Heart left ventricle (tissue), 16 donors: ENCODE measurements at regions of chr5 and their contacts with region 1.

Region 1: DNA sequence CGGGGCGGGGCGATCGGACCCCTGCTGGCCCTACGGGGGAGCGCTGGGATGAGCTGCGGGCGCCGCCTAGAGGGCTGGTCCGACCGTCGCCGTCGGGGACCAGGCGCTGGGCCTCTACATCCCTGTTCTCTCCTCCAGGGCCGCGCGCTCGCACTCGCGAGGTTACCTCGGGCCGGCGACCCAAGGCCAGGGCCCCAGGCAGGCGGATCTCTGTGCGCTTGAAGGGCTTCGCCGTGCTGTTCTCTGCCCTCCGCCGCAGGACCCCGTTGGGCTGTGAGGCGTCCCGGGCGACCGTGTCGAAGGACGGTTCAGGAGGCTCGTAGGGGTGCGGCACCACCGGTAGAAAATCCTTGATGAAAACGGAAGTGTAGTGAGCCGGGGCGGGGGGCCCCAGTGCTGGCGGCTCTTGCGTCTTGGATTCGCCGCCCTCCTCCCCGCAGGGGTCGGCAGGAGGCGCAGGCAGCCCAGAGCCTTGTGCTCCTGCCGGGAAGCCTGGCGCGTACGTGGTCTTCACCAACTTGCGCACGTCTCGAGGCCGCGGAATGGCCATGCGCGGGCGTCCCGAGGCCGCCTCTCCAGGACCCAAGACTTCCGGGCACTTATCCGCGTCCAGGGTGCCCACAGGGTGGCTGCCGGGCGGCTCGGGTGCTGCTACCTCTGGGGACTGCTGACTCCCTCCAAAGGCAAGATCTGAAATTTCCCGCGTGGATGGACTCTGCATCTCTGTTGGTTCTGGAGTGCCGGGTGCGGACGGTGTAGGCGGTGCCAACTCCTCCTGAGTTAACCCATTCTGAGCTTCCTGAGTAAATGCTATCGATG is 2.0 kb downstream of the PROB1 start:
- DNase-seq: peak in 4 of 5 donors; percentile 57 to 86 (median 66)
- ATAC-seq: peak in 3 of 4 donors; percentile 8 to 27 (median 19)
- H3K4me3 ChIP-seq: peak overlapping the region; percentile 65 to 82 (median 69)
- H3K27ac ChIP-seq: peak overlapping the region in 10 of 12 donors; percentile 84 to 97 (median 92)
- H3K4me1 ChIP-seq: peaks cover 5 to 90% (median 61%) of the 10 kb centered on the region in 12 donors
- H3K27me3 ChIP-seq: peaks cover 0 to 28% (median 0%) of the 10 kb centered on the region in 9 donors
- CTCF ChIP-seq: peak in 11 of 12 donors; percentile 23 to 56 (median 39)
- POLR2A ChIP-seq: no peak

Region 2: DNA sequence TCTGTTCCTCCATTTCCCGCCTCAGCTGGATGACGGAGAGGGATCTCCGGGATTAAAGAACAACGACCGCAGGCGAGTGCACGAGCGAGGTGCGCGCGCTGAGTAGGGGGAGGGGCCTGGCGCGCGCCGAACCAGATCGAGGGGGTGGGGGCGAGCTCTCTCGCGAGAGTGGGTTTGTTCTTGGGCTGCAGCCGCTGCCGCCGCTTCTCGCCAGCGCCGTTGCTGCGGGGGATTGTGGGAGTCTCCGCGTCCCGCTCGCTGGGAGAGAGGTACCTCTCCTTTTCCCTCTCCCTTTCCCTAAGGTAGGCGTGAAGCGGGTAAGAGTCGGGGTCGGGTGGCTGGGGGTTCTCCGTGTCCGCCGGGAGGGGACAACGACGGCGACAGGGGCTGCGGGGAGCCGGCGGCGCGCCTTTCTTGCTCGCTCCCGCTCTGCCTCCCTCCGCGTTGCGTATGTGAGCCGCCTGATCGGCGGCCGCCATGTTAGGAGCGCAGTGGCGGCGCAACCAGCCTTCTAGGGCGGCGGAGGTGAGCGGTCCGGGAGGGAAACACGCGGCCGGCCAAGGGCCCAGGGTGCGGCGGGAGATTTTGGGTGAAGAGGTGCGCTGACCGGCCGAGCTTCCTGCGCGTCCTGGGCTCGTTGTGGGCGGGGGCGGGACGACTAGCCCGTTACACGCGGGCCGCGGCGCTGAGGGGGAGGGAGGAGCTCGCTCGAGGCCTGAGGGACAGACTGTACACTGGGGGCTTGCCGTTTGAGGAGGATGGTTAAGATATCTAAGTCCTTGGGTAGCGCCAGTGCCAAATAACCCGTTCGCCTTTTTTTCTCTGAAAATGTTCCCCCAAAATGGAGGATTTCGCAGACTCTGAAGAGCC is 99.1 kb before region 1 on chr5 and contains the start of gene MATR3:
- intact Hi-C with region 1: loop called in 1 of 10 experiments (anchors 10 kb)
- DNase-seq: peak; percentile 97
- ATAC-seq: peak; percentile 95 to 97 (median 96)
- H3K4me3 ChIP-seq: peak within 1 kb of the TSS; percentile 64 to 98 (median 88)
- H3K27ac ChIP-seq: peak within 1 kb of the TSS; percentile 93 to 100 (median 99)
- H3K4me1 ChIP-seq: peaks cover 8 to 46% (median 38%) of the 10 kb centered on the region in 12 donors
- H3K27me3 ChIP-seq: no peaks in the 10 kb centered on the region
- CTCF ChIP-seq: no peak
- POLR2A ChIP-seq: peak; percentile 42 to 90
- total RNA-seq, gene MATR3: 133 to 208 (median 139) TPM

Region 3: GRCh38 chr5:139368613-139369012 is 24.3 kb before region 1 on chr5:
- intact Hi-C with region 1: no loop called
- DNase-seq: no peak
- ATAC-seq: no peak
- H3K4me3 ChIP-seq: no peak overlapping the region
- H3K27ac ChIP-seq: peak overlapping the region in 2 of 12 donors; percentile 3 to 33
- H3K4me1 ChIP-seq: peaks cover 0 to 33% (median 5%) of the 10 kb centered on the region in 12 donors
- H3K27me3 ChIP-seq: no peaks in the 10 kb centered on the region
- CTCF ChIP-seq: no peak
- POLR2A ChIP-seq: no peak

Region 4: GRCh38 chr5:139417214-139417613 is 24.3 kb after region 1 on chr5:
- intact Hi-C with region 1: loop called in 4 of 10 experiments (anchors 1 to 5 kb)
- DNase-seq: peak in 4 of 5 donors; percentile 73 to 82 (median 78)
- ATAC-seq: peak; percentile 63 to 73 (median 70)
- H3K4me3 ChIP-seq: no peak overlapping the region
- H3K27ac ChIP-seq: peak overlapping the region; percentile 81 to 96 (median 91)
- H3K4me1 ChIP-seq: peaks cover 18 to 73% (median 63%) of the 10 kb centered on the region in 12 donors
- H3K27me3 ChIP-seq: no peaks in the 10 kb centered on the region
- CTCF ChIP-seq: no peak
- POLR2A ChIP-seq: no peak

Region 5: DNA sequence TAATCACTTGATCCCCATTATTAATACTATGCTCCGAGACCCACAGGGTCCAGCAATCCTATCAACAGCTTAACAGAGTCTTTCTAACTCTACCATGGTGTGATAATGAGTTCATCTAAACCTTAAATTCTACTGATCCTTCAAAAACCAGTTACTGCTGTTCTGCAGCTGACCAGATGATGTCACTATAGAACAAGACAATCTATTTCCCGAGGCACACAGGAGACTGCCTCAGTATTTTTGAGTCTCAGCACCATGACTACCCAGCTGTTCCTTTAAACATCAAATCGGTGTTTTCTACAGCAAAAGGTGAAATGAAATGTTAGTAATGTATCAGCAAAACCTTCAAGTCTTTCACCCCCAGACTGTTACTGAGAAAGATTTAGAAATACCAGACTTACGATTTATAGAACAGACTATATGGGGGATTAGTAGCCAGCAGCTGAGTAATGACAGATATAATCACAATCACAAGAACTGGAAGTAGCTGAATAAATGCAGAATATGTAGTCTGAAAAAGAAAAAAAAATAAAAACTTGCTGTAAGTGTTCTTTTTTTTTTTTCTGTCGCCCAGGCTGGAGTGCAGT is 29.5 kb after region 1 on chr5:
- intact Hi-C with region 1: loop called in 3 of 10 experiments (anchors 1 to 5 kb)
- DNase-seq: no peak
- ATAC-seq: peak in 2 of 4 donors; percentile 29 to 40
- H3K4me3 ChIP-seq: no peak overlapping the region
- H3K27ac ChIP-seq: no peak overlapping the region
- H3K4me1 ChIP-seq: peaks cover 6 to 39% (median 27%) of the 10 kb centered on the region in 12 donors
- H3K27me3 ChIP-seq: no peaks in the 10 kb centered on the region
- CTCF ChIP-seq: peak; percentile 67 to 94 (median 82)
- POLR2A ChIP-seq: no peak

Region 6: DNA sequence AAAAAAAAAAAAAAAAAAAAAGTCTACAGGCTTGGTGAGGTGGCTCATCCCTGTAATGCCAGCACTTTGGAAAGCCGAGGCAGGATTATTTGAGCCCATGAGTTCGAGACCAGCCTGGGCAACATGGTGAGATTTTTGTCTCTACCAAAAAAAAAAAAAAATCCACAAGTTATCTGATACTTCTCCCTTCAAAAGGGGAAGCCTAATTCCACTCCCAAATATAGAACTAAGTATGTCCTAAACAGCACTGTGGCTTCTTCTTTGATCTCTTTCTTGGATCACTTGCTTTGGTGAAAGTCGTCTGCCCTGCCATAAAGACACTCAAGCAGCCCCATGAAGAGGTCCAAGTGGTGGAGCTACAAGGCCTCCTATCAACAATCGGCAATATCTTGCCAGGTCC is 108.5 kb after region 1 on chr5:
- intact Hi-C with region 1: no loop called
- DNase-seq: no peak
- ATAC-seq: no peak
- H3K4me3 ChIP-seq: no peak overlapping the region
- H3K27ac ChIP-seq: no peak overlapping the region
- H3K4me1 ChIP-seq: peaks cover 0 to 1% (median 0%) of the 10 kb centered on the region in 12 donors
- H3K27me3 ChIP-seq: no peaks in the 10 kb centered on the region
- CTCF ChIP-seq: no peak
- POLR2A ChIP-seq: no peak